GM10248 (cell line): ENCODE measurements at regions of chr6 and their contacts with region 1.

Region 1: GRCh38 chr6:41072676-41073623 is at the start of gene NFYA:
- DNase-seq: peak; percentile 96
- CTCF ChIP-seq: peak; percentile 28

Region 2: DNA sequence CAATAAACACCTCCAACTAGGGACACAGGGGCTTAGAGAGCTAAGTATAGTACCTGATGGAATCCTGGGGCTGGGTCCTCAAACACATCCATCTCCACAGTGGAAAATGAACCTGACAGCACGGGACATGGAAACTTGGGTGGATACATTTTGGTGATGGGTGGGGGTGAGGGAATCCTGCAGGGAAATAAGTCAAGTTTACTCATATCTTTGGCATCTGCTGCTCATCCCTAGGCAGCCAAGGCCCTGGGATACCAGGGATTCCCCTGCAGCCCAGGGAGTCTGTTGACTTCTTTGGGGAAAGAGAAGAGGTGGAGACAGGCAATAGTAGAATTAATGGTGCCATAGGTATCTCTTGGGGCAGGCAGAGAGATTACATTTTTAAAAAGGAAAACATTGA is 13.4 kb before region 1 on chr6:
- CTCF ChIA-PET with region 1: interaction called, 22 read pairs
- POLR2A ChIA-PET with region 1: no interaction called
- DNase-seq: no peak
- CTCF ChIP-seq: no peak

Region 3: GRCh38 chr6:41092421-41093140 is 19.6 kb after region 1 on chr6:
- CTCF ChIA-PET with region 1: interaction called, 12 read pairs
- POLR2A ChIA-PET with region 1: no interaction called
- DNase-seq: peak; percentile 24
- CTCF ChIP-seq: peak; percentile 37